ENCODE measurements at regions of chr11 and their contacts with region 1.

Region 1: GRCh38 chr11:104191124-104191523 is 27.2 kb upstream of the PDGFD start:
- DNase-seq: no peak
- ATAC-seq: no peak
- H3K4me3 Mint-ChIP-seq: no peak overlapping the region
- H3K27ac Mint-ChIP-seq: no peak overlapping the region
- H3K4me1 Mint-ChIP-seq: peaks cover 7% of the 10 kb centered on the region; the same call in 1 of the 2 replicates
- H3K27me3 Mint-ChIP-seq: no peaks in the 10 kb centered on the region
- CTCF ChIP-seq: no peak

Region 2: DNA sequence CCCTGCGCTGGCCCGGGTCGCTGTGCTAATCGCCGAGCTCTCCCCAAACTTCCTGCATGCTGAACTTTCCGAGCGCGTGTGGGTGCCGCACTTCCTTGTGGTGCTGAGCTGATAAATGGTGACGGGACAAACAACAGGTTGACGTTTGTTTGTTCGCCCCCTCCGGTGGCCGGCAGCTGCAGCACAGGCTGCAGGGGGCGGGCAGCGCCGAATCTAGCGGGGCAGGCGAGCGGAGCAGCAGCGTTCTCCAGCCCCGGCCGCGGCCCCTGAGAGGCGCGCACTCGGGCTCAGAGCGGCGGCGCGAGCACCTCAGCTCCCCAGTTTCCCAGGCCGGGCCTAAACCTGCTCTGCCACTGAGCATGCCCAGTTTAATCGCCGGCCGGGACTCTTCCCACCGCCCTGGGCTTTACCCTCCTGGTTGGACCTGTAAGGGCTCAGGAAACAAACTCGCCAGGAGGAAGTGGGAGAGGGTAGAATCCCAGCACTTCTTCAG is 27.1 kb before region 1 on chr11 and contains the start of gene PDGFD:
- CTCF ChIA-PET with region 1: interaction called, 11 read pairs
- POLR2A ChIA-PET with region 1: no interaction called
- DNase-seq: peak; percentile 89
- ATAC-seq: peak; percentile 94
- H3K4me3 Mint-ChIP-seq: peak within 1 kb of the TSS; percentile 91
- H3K27ac Mint-ChIP-seq: peak within 1 kb of the TSS; percentile 84
- H3K4me1 Mint-ChIP-seq: peaks cover 19% of the 10 kb centered on the region
- H3K27me3 Mint-ChIP-seq: peaks cover 3% of the 10 kb centered on the region; the same call in 1 of the 2 replicates
- CTCF ChIP-seq: no peak; the same call in 1 of the 2 replicates
- total RNA-seq, gene PDGFD: 2.6 to 3.1 TPM (median 2.9 TPM) in 3 replicates

Region 3: DNA sequence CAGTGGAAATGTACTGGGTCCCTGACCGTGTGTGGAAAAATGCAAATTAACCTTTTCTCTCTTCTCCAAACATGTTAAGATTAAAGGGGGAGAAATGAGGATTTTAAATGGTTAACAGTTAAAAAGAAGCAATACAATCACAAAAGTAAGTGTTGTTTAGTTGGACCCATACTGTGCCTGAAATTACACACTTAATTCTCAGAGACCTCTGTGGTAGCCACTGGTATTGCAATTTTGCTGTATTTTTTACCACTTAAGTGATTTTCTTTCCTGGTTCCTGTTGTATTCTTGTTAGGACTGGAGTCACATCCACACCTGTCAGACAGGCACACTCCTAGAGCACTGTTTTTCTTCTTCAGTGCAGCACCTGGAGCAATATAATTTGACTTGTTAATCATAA is 152.5 kb after region 1 on chr11:
- CTCF ChIA-PET with region 1: no interaction called
- POLR2A ChIA-PET with region 1: no interaction called
- DNase-seq: no peak
- ATAC-seq: peak; percentile 60; the same call in 1 of the 2 replicates
- H3K4me3 Mint-ChIP-seq: no peak overlapping the region
- H3K27ac Mint-ChIP-seq: no peak overlapping the region
- H3K4me1 Mint-ChIP-seq: no peaks in the 10 kb centered on the region
- H3K27me3 Mint-ChIP-seq: no peaks in the 10 kb centered on the region
- CTCF ChIP-seq: no peak